ENCODE measurements at regions of chr7 and their contacts with region 1.

Region 1: GRCh38 chr7:135281363-135281949 is 47.8 kb downstream of the STRA8 start:
- DNase-seq: peak; percentile 75 to 89 (median 80)
- ATAC-seq: peak; percentile 94
- H3K4me3 ChIP-seq: no peak overlapping the region
- H3K27ac ChIP-seq: no peak overlapping the region
- H3K4me1 ChIP-seq: no peaks in the 10 kb centered on the region
- H3K27me3 ChIP-seq: no peaks in the 10 kb centered on the region

Region 2: DNA sequence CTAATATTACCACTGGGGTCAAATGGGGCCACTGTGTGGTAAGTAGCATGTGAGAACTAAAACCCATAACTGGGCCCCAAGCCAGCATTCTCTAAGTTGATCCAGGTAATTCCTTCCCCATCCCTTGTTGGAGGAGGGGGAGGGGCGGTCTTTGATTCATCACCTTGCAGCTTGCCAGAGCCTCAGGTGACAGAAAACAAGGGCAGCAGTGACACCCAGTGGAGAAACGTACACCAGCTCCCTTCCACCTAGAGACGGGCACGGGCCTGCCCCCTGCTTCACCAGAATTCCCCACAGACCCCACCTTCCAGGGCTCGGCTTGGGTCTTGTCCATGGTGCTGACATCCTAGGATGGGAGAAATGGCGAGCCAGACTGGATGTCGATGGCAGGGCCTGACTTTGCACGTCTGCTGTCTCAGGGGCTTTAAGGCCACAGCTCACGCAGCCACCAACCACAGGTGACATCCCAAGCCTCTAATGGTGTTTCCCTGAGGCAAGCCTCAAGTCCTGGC is 54.2 kb after region 1 on chr7:
- intact Hi-C with region 1: loop called in 2 of 4 experiments (anchors 5 to 10 kb)
- DNase-seq: peak in 2 of 3 donors; percentile 26 to 47
- ATAC-seq: peak; percentile 60 to 62
- H3K4me3 ChIP-seq: no peak overlapping the region
- H3K27ac ChIP-seq: no peak overlapping the region
- H3K4me1 ChIP-seq: no peaks in the 10 kb centered on the region
- H3K27me3 ChIP-seq: no peaks in the 10 kb centered on the region

Region 3: DNA sequence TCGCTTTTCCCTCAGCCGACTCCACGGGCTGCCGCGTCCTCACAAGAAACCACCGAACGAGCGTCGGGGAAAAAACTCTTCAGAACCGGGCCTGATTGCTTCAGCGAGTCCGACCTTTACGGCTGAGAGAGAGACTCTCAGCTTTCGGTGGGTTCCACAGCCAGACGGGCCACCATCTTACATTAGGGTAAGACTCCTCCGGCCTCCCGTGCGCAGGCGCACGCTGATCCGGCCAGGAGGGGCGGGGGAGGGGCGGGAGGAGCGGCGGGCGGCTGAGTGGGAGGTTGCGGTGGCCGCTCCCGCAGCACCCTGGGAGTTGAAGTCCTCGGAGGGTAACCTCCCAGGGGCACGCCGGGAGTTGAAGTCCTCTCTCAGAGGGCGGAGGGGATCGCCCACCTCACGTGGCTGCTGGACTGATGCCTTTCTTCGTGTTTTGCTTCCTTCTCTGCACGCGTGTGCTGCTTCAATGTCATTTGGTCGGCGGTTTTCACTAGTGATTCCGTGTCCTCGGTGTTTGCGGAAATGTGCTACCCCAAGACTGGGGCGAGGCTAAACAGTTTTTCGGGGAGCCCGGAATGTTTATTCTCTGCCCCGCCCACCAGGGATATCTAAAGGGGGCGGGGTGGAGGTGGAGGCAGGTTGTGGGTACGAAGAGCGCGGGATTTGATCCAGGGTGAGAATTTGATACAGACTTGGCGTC is 228.6 kb after region 1 on chr7 and contains the start of gene CNOT4:
- intact Hi-C with region 1: loop called in 1 of 4 experiments (anchors 5 kb)
- DNase-seq: peak; percentile 97 to 99 (median 98)
- ATAC-seq: peak; percentile 99
- H3K4me3 ChIP-seq: peak within 1 kb of the TSS; percentile 98
- H3K27ac ChIP-seq: peak within 1 kb of the TSS; percentile 98
- H3K4me1 ChIP-seq: peaks cover 2% of the 10 kb centered on the region
- H3K27me3 ChIP-seq: no peaks in the 10 kb centered on the region
- total RNA-seq, gene CNOT4: 25.3 to 33.1 (median 29.3) TPM

Region 4: GRCh38 chr7:135558337-135558767 is 276.9 kb after region 1 on chr7:
- intact Hi-C with region 1: loop called (anchors 2 to 5 kb)
- DNase-seq: peak in 2 of 3 donors; percentile 55 to 72
- ATAC-seq: peak; percentile 73 to 78
- H3K4me3 ChIP-seq: peak overlapping the region; percentile 80
- H3K27ac ChIP-seq: peak overlapping the region; percentile 100
- H3K4me1 ChIP-seq: peaks cover 2% of the 10 kb centered on the region
- H3K27me3 ChIP-seq: no peaks in the 10 kb centered on the region

Region 5: DNA sequence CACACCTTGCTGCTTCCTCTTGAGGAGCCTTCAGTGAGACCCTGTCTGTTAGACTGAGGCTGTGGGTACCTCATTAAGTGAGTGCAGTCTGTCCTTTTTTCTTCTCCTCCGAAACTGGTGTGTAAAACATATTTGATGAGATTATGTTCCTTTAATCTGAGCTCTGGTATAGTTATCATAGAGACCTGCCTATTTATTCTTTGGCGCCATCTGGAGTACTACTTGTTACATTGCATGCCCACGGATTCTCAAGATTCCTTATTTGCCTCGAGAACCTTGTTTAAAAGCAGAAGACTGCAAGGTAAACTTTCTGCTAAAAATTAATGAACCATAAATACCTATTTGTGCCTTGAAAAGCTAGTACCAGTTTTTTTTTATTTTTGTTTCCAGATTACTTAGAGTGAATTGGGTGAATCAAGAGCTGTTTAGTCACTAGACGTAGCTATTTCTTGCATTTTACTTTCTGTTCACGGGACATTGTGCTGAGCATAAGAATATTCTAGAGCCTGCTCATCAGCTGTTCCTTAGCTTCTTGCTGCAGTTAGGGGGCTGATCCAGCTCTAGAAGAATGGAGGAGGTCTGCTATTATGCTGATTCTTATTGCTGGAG is 363.9 kb after region 1 on chr7:
- intact Hi-C with region 1: loop called in 3 of 4 experiments (anchors 5 to 10 kb)
- DNase-seq: no peak
- ATAC-seq: peak; percentile 26 to 73
- H3K4me3 ChIP-seq: no peak overlapping the region
- H3K27ac ChIP-seq: no peak overlapping the region
- H3K4me1 ChIP-seq: no peaks in the 10 kb centered on the region
- H3K27me3 ChIP-seq: no peaks in the 10 kb centered on the region

Region 6: GRCh38 chr7:136234040-136234439 is 952.6 kb after region 1 on chr7:
- intact Hi-C with region 1: no loop called
- DNase-seq: no peak
- ATAC-seq: no peak
- H3K4me3 ChIP-seq: no peak overlapping the region
- H3K27ac ChIP-seq: no peak overlapping the region
- H3K4me1 ChIP-seq: no peaks in the 10 kb centered on the region
- H3K27me3 ChIP-seq: no peaks in the 10 kb centered on the region